Endothelial cell of umbilical vein (primary cell): ENCODE measurements at regions of chr11 and their contacts with region 1.

Region 1: DNA sequence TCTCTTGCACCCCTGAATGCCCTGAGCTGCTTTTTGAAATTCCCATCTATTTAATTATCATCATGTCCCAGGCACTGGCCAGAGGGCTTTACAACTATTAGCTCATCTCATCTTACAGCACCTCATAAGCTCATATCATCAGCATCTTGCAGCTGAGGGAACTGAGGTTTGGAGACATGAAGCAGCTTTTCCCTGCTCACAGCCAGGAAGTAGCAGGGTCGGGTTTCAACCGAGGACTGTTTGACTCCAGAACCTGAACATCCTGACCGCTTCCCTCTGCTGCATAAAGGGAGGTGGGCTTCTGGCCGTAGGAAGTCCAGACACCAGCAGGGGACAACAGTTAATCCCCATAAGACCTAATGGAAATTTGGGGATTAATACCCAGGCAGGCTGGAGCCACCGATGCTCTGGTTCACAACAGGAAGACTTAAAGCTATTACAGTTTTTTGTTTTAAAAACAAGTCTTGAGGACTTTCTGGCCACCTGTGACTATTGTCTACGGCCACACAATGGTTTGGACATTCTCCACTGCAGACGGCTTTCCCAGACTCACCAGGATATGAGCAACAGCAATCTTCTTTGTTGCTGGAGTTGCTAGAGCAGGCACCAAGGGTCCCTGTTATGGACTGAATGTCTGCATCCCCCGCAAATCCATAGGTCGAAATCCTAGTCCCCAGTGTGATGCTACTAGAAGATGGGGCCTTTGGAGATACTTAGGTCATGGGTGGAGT is 47.4 kb downstream of the CHST1 start:
- DNase-seq: peak; percentile 33
- H3K4me3 ChIP-seq: no peak overlapping the region
- H3K27ac ChIP-seq: peak overlapping the region; percentile 57
- H3K4me1 ChIP-seq: peaks cover 5% of the 10 kb centered on the region
- H3K27me3 ChIP-seq: no peaks in the 10 kb centered on the region
- CTCF ChIP-seq: no peak
- POLR2A ChIP-seq: no peak

Region 2: GRCh38 chr11:45603946-45604682 is 13.9 kb before region 1 on chr11:
- CTCF ChIA-PET with region 1: interaction called, 3 read pairs
- POLR2A ChIA-PET with region 1: no interaction called
- dilution Hi-C with region 1: no loop called
- intact Hi-C with region 1: loop called (anchors 1 kb)
- DNase-seq: no peak
- H3K4me3 ChIP-seq: no peak overlapping the region
- H3K27ac ChIP-seq: no peak overlapping the region
- H3K4me1 ChIP-seq: no peaks in the 10 kb centered on the region
- H3K27me3 ChIP-seq: peaks cover 0 to 10% of the 10 kb centered on the region in 2 experiments
- CTCF ChIP-seq: no peak
- POLR2A ChIP-seq: no peak

Region 3: DNA sequence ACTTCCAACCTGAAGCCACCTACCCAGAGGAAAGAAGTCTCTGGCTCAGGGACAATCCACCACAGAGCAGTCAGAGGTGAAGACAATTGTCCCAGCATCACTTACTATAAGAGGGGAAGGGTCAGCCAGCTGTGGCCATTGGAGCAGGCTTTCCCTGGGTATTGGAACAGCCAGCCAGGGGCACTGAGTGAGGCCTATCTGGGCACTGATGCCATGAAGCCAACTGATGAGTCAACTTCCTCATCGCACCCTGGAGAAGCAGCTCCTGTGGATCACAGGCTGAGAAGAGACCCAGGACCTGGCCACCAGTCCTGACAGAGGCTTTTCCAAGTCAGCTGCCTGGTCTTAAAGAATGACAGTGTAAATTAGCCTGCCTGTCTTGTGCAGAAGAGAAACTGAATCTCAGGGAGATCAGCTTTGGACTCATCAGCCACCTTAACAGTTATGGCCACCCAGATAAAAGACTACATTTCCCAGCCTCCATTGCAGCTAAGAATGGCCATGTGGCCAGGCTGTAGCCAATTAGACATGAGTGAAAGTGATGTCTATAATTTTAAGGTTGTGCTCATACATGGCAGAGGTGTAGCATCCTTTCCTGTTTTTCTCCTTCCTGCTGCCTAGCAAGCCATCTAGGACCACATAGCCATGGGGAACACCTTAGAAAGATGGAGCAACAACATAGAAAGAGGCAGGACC is 28.4 kb after region 1 on chr11:
- CTCF ChIA-PET with region 1: interaction called, 4 read pairs
- POLR2A ChIA-PET with region 1: no interaction called
- dilution Hi-C with region 1: no loop called
- intact Hi-C with region 1: loop called (anchors 1 kb)
- DNase-seq: peak; percentile 60
- H3K4me3 ChIP-seq: no peak overlapping the region
- H3K27ac ChIP-seq: no peak overlapping the region
- H3K4me1 ChIP-seq: peaks cover 51% of the 10 kb centered on the region
- H3K27me3 ChIP-seq: no peaks in the 10 kb centered on the region
- CTCF ChIP-seq: no peak
- POLR2A ChIP-seq: no peak

Region 4: GRCh38 chr11:46112961-46113617 is 495.1 kb after region 1 on chr11:
- CTCF ChIA-PET with region 1: no interaction called
- POLR2A ChIA-PET with region 1: no interaction called
- dilution Hi-C with region 1: no loop called
- intact Hi-C with region 1: no loop called
- DNase-seq: peak; percentile 58
- H3K4me3 ChIP-seq: no peak overlapping the region
- H3K27ac ChIP-seq: no peak overlapping the region
- H3K4me1 ChIP-seq: no peaks in the 10 kb centered on the region
- H3K27me3 ChIP-seq: no peaks in the 10 kb centered on the region
- CTCF ChIP-seq: no peak
- POLR2A ChIP-seq: no peak